ENCODE measurements at regions of chr7 and their contacts with region 1.

Region 1: GRCh38 chr7:21850531-21851285 is 95.0 kb downstream of the CDCA7L start:
- DNase-seq: no peak
- ATAC-seq: no peak
- H3K4me3 ChIP-seq: no peak overlapping the region
- H3K4me3 Mint-ChIP-seq: no peak overlapping the region
- H3K27ac ChIP-seq: peak overlapping the region in 1 of 2 experiments; percentile 47
- H3K27ac Mint-ChIP-seq: peak overlapping the region; percentile 94
- H3K4me1 ChIP-seq: peaks cover 21% of the 10 kb centered on the region
- H3K4me1 Mint-ChIP-seq: peaks cover 29% of the 10 kb centered on the region
- H3K27me3 ChIP-seq: no peaks in the 10 kb centered on the region
- H3K27me3 Mint-ChIP-seq: no peaks in the 10 kb centered on the region
- CTCF ChIP-seq: no peak

Region 2: GRCh38 chr7:21806388-21806787 is 44.3 kb before region 1 on chr7:
- CTCF ChIA-PET with region 1: no interaction called
- POLR2A ChIA-PET with region 1: no interaction called
- intact Hi-C with region 1: no loop called
- DNase-seq: no peak
- ATAC-seq: no peak
- H3K4me3 ChIP-seq: no peak overlapping the region
- H3K4me3 Mint-ChIP-seq: no peak overlapping the region
- H3K27ac ChIP-seq: no peak overlapping the region
- H3K27ac Mint-ChIP-seq: no peak overlapping the region
- H3K4me1 ChIP-seq: no peaks in the 10 kb centered on the region
- H3K4me1 Mint-ChIP-seq: no peaks in the 10 kb centered on the region
- H3K27me3 ChIP-seq: no peaks in the 10 kb centered on the region
- H3K27me3 Mint-ChIP-seq: no peaks in the 10 kb centered on the region
- CTCF ChIP-seq: no peak

Region 3: GRCh38 chr7:21898265-21898930 is 47.7 kb after region 1 on chr7:
- CTCF ChIA-PET with region 1: interaction called, 3 read pairs
- POLR2A ChIA-PET with region 1: no interaction called
- intact Hi-C with region 1: loop called in 1 of 2 experiments (anchors 2 kb)
- DNase-seq: peak in 5 of 9 experiments; percentile 7 to 66 (median 49)
- ATAC-seq: peak; percentile 75
- H3K4me3 ChIP-seq: peak overlapping the region; percentile 21 to 23
- H3K4me3 Mint-ChIP-seq: peak overlapping the region; percentile 77
- H3K27ac ChIP-seq: peak overlapping the region; percentile 15 to 68
- H3K27ac Mint-ChIP-seq: peak overlapping the region; percentile 92
- H3K4me1 ChIP-seq: peaks cover 17% of the 10 kb centered on the region
- H3K4me1 Mint-ChIP-seq: peaks cover 21% of the 10 kb centered on the region
- H3K27me3 ChIP-seq: no peaks in the 10 kb centered on the region
- H3K27me3 Mint-ChIP-seq: no peaks in the 10 kb centered on the region
- CTCF ChIP-seq: no peak

Region 4: DNA sequence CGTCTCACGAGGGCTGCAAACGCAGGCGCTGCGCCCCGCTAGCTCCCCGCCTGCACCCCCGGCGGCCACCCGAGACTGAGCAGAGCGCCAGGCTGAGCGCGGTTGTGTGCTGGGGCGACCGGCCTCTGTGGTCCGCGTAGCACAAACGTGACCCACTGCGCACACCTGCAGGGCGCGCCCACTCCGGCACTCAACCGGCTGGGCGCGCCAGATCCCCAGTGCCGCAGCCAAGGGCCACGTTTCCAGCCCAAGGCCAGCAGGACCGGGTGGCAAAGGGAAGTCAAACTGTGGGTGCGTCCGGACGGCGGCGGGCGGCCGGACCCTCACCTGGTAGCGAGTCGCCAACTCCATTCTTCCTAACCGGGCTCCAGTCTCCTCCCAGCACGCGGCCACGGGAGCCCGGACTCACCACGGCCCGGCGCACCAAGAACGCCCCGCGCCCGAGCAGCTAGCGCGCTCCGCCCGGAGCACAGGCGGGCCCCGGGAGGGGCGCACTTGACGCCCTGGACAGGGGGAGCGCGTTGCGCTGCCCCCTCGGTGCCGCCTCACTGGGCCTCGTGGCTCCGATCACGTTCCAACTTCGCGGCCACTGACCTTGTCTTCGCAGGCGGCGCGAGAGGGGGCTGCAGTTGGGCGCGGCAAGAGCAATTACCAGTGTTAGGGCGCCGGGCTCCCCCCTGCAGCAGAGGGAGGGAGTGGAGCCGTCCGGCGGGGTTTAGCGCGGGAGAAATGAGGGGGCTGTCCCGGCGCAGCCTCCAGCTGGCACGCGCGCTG is 94.9 kb after region 1 on chr7 and contains the start of gene CDCA7L:
- CTCF ChIA-PET with region 1: no interaction called
- POLR2A ChIA-PET with region 1: interaction called, 4 read pairs
- intact Hi-C with region 1: loop called in 1 of 2 experiments (anchors 2 kb)
- DNase-seq: peak; percentile 6 to 73 (median 47)
- ATAC-seq: peak; percentile 80
- H3K4me3 ChIP-seq: peak within 1 kb of the TSS; percentile 62 to 72
- H3K4me3 Mint-ChIP-seq: peak within 1 kb of the TSS; percentile 88
- H3K27ac ChIP-seq: peak within 1 kb of the TSS in 1 of 2 experiments; percentile 38
- H3K27ac Mint-ChIP-seq: peak within 1 kb of the TSS; percentile 63
- H3K4me1 ChIP-seq: peaks cover 15% of the 10 kb centered on the region
- H3K4me1 Mint-ChIP-seq: peaks cover 55% of the 10 kb centered on the region
- H3K27me3 ChIP-seq: peaks cover 0 to 2% of the 10 kb centered on the region in 2 experiments
- H3K27me3 Mint-ChIP-seq: peaks cover 3% of the 10 kb centered on the region
- CTCF ChIP-seq: no peak
- total RNA-seq, gene CDCA7L: 18.4 to 24.7 TPM

Measured in CD8-positive, alpha-beta T cell (primary cell).